ENCODE measurements at regions of chr7 and their contacts with region 1.

Region 1: DNA sequence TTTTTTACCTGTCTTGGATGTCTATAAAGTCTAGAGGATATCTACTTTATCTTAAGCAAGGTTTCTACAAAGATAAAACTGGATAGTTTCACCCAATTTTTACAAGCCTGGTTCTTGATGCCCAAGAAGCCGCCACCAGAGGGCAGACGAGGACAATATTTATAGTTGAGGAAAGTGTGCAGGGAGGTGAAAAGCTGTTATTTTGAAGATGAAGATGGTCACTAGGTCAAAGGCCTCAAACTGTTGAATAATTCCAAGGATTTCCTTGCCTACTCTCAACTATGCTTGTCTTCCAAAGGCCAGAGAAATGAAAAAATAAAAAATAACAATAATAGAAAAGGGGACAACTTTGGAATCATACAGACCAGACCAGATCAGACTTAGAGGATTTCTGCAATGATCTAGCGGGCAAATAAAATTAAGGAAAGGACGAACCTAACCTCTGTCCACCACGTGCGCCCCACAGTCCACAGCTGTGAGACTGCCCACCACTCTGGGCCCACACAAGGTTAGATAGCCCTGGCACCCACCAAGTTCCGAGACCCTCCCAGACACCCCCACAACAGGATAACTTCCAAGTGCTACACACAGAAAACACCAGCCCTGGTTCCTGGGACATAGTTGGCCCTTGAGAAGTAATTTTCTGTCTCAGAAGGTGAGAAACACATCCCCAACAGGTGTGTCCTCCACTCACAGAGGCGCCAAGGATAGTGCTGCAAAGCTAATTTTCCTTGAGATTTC is 2.8 kb downstream of the PKD1L1 start:
- DNase-seq: no peak
- H3K4me3 ChIP-seq: no peak overlapping the region
- H3K27me3 ChIP-seq: no peaks in the 10 kb centered on the region
- CTCF ChIP-seq: peak; percentile 76

Region 2: DNA sequence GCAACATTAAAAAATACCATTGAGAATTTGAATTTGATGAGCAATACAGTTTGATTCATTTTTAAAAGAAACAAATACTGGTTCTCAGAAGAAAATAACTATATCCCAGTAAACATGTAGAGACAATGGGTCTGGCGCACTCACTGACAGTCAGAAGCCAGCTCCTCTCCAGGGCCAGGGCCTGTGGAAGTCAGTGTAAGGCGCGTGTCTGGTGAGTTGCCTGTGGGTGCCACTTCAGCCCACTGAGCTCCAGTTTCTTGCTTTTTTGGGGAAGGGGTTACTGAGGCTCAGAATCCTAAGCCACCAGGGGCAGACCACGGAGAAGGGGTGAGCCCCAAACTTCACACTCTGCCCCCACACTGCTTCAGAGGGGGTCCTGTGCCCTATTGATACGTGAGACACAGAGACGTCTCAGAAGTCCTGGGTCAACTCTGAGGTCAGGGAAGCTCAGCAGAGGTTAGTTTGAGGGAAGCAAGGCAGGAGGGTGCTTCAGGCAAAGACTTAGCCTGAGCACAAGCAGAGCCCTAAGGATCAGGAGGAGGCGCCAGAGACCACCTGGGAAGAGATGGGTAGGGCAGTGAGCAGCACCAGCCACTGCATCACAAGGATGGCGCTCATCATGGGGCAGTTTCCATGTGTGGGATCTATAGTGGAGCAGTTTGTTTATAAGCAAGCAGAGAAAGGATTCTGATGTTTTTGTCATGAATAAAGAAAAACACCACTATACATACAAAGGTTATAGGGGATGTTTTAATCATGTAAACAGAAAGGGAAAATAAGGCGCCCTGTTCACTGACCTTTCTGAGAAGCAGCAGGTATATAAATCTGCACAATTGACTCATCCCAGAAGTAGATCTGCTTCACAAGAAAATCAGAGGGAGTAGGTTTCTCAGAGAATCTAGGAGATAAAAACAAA is 92.8 kb before region 1 on chr7:
- CTCF ChIA-PET with region 1: interaction called, 10 read pairs
- POLR2A ChIA-PET with region 1: no interaction called
- DNase-seq: no peak
- H3K4me3 ChIP-seq: no peak overlapping the region
- H3K27me3 ChIP-seq: 0 out of 2 replicates have a peak, but pooled peaks cover 2% of the 10 kb centered on the region
- CTCF ChIP-seq: 0 out of 2 replicates have a peak, but pooled peaks have one; percentile 19

Region 3: DNA sequence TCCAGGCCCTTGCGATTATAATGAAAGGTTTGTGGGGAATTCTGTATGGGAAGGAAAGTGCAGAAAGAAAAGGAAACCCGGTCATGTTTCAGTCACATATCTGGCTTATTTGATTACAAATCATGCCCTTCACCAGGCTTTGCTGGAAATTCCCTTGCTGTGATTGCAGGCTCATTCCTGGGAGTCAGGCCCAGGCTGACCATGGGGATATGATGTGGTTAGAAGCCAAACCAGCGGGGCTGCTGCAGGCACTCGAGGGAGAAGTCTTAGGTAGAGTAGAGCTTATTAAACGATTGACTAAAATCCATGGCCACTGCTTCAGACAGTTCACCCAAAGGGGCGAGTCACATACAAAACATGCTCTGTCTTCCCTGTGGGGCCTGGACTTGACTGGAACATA is 13.4 kb before region 1 on chr7:
- CTCF ChIA-PET with region 1: interaction called, 10 read pairs
- POLR2A ChIA-PET with region 1: no interaction called
- DNase-seq: no peak
- H3K4me3 ChIP-seq: no peak overlapping the region
- H3K27me3 ChIP-seq: no peaks in the 10 kb centered on the region
- CTCF ChIP-seq: no peak

Region 4: DNA sequence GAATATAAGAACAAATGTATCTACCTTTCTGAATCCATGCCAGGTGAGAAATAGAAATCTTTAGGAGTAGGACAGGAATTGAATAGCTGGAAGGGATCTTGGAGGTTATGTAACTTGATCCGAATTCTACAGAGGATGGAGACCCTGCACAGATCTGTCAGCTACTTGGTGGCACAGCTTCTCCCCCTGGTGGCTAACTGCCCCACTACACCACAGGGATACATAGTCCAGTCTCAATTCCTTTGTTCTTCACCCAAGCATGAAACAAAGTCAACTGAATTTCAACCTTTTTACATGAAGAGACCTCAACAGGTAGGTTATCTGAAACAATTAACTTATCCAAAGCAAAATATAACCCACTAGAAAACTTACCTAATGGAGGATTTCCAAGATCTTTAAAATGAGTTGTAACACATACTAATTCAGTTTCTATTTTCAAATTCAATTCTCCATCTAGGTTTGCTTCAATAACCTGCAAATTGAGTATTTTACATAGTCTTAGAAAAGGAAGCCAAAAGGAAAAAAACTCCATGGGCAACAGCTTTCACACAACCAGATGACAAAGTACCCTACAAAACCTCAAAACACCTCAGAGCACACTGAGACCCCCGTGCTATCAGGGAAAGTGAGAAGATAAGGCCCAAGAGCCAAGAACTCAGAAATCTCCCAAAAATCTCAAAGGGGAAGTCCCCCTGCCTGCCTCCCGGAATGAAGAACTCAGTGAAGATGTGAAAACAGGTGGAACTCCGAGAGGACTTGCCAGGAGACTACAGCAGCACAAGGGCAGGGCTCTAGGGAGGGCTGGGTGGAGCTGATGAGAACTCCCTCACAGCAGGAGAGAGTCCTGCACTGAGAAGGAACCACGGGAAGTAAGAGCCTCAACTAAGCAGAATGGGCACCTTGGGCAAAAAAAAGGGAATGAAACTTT is 23.7 kb after region 1 on chr7:
- CTCF ChIA-PET with region 1: interaction called, 59 read pairs
- POLR2A ChIA-PET with region 1: no interaction called
- DNase-seq: no peak
- H3K4me3 ChIP-seq: no peak overlapping the region
- H3K27me3 ChIP-seq: no peaks in the 10 kb centered on the region
- CTCF ChIP-seq: peak; percentile 94

Region 5: GRCh38 chr7:48139459-48139858 is 194.0 kb after region 1 on chr7:
- CTCF ChIA-PET with region 1: interaction called, 13 read pairs
- POLR2A ChIA-PET with region 1: no interaction called
- DNase-seq: no peak
- H3K4me3 ChIP-seq: no peak overlapping the region
- H3K27me3 ChIP-seq: no peaks in the 10 kb centered on the region
- CTCF ChIP-seq: peak; percentile 56

Region 6: GRCh38 chr7:48154792-48155413 is 209.5 kb after region 1 on chr7:
- CTCF ChIA-PET with region 1: interaction called, 100 read pairs
- POLR2A ChIA-PET with region 1: no interaction called
- DNase-seq: no peak
- H3K4me3 ChIP-seq: no peak overlapping the region
- H3K27me3 ChIP-seq: no peaks in the 10 kb centered on the region
- CTCF ChIP-seq: peak; percentile 87

Measured in BJ (cell line).